ENCODE measurements at regions of chr2 and their contacts with region 1.

Region 1: DNA sequence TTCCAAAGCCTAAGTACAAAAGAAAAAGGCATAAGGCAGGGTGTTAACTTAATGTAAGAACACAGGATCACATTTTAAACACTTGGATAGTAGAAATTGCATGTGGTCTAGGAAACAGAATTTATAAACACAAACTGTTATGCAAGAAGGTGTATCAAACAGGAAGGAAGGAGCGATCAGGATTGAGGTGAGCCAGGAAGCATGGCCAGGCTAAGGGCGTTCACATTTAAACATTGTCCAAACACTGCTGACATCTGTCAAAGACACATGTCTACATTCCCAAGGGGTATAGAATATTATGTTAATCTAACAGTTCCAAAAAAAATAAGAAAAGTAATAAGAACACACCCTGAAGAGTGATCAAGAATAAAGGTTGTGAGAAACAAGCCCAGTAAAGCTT is 71.3 kb downstream of the CCDC141 start:
- DNase-seq: no peak
- H3K4me3 ChIP-seq: no peak overlapping the region
- H3K4me3 Mint-ChIP-seq: no peak overlapping the region
- H3K27ac Mint-ChIP-seq: no peak overlapping the region
- H3K4me1 ChIP-seq: no peaks in the 10 kb centered on the region
- H3K4me1 Mint-ChIP-seq: no peaks in the 10 kb centered on the region
- H3K27me3 ChIP-seq: no peaks in the 10 kb centered on the region
- H3K27me3 Mint-ChIP-seq: no peaks in the 10 kb centered on the region
- CTCF ChIP-seq: no peak

Region 2: DNA sequence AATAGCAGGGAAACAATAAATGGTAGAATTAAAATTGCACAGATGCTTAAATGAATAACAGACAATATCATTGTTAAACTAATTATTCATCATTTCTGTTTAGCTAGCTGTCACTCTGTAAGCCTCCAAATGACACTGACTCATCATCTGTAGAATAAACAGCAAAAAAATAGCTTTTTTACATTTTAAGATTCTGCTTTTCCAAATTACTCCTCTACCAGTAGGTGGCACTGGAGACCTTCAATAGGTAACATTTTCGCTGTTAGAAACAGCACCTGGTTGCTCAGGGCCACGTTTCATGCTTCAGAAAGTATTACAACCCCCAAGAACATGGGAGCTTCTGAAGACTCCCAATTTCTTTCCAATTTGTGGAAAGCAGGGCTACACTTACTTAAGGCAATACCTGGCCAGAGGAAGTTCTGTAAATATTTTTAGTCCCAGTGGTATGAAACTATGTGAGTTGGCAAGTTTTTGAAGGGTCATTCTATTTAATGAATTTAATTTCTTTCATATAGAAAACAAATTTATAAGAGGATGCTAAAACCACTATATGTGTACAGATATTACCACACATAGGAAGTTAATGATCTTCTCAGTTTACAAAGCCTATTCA is 216.8 kb before region 1 on chr2:
- CTCF ChIA-PET with region 1: no interaction called
- POLR2A ChIA-PET with region 1: no interaction called
- intact Hi-C with region 1: no loop called
- DNase-seq: peak; percentile 35 to 53
- H3K4me3 ChIP-seq: no peak overlapping the region
- H3K4me3 Mint-ChIP-seq: no peak overlapping the region
- H3K27ac Mint-ChIP-seq: no peak overlapping the region
- H3K4me1 ChIP-seq: no peaks in the 10 kb centered on the region
- H3K4me1 Mint-ChIP-seq: no peaks in the 10 kb centered on the region
- H3K27me3 ChIP-seq: no peaks in the 10 kb centered on the region
- H3K27me3 Mint-ChIP-seq: no peaks in the 10 kb centered on the region
- CTCF ChIP-seq: peak; percentile 74 to 83

Region 3: GRCh38 chr2:178990533-178991241 is 12.0 kb after region 1 on chr2:
- CTCF ChIA-PET with region 1: no interaction called
- POLR2A ChIA-PET with region 1: no interaction called
- intact Hi-C with region 1: loop called (anchors 1 kb)
- DNase-seq: no peak
- H3K4me3 ChIP-seq: no peak overlapping the region
- H3K4me3 Mint-ChIP-seq: no peak overlapping the region
- H3K27ac Mint-ChIP-seq: no peak overlapping the region
- H3K4me1 ChIP-seq: no peaks in the 10 kb centered on the region
- H3K4me1 Mint-ChIP-seq: no peaks in the 10 kb centered on the region
- H3K27me3 ChIP-seq: no peaks in the 10 kb centered on the region
- H3K27me3 Mint-ChIP-seq: no peaks in the 10 kb centered on the region
- CTCF ChIP-seq: no peak

Region 4: GRCh38 chr2:179049546-179050311 is 71.1 kb after region 1 on chr2 and contains the start of gene CCDC141:
- CTCF ChIA-PET with region 1: no interaction called
- POLR2A ChIA-PET with region 1: no interaction called
- intact Hi-C with region 1: no loop called
- DNase-seq: peak; percentile 73 to 78
- H3K4me3 ChIP-seq: peak within 1 kb of the TSS; percentile 40
- H3K4me3 Mint-ChIP-seq: peak within 1 kb of the TSS; percentile 88
- H3K27ac Mint-ChIP-seq: peak within 1 kb of the TSS; percentile 87
- H3K4me1 ChIP-seq: peaks cover 26% of the 10 kb centered on the region
- H3K4me1 Mint-ChIP-seq: peaks cover 6% of the 10 kb centered on the region
- H3K27me3 ChIP-seq: no peaks in the 10 kb centered on the region
- H3K27me3 Mint-ChIP-seq: no peaks in the 10 kb centered on the region
- CTCF ChIP-seq: no peak
- total RNA-seq, gene CCDC141: 11.5 and 16.6 TPM in 2 replicates

Region 5: DNA sequence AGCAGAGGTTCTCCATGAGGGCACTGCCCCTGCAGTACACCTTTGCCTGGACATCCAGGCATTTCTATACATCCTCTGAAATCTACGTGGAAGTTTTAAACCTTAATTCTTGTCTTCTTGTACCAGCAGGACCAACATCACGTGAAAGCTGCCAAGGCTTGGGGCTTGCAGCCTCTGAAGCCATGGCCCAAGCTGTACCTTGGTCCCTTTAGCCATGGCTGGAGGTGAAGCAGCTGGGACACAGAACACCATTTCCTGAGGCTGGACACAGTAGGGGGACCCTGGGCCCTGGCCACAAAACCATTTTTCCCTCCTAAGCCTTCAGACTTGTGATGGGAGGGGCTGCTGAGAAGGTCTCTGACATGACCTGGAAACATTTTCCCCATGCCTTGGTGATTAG is 104.0 kb after region 1 on chr2:
- CTCF ChIA-PET with region 1: no interaction called
- POLR2A ChIA-PET with region 1: no interaction called
- intact Hi-C with region 1: no loop called
- DNase-seq: no peak
- H3K4me3 ChIP-seq: no peak overlapping the region
- H3K4me3 Mint-ChIP-seq: no peak overlapping the region
- H3K27ac Mint-ChIP-seq: no peak overlapping the region
- H3K4me1 ChIP-seq: 0 out of 2 replicates have a peak, but pooled peaks cover 6% of the 10 kb centered on the region
- H3K4me1 Mint-ChIP-seq: peaks cover 6% of the 10 kb centered on the region
- H3K27me3 ChIP-seq: no peaks in the 10 kb centered on the region
- H3K27me3 Mint-ChIP-seq: no peaks in the 10 kb centered on the region
- CTCF ChIP-seq: no peak

Measured in Caco-2 (cell line).